ENCODE measurements at regions of chr11 and their contacts with region 1.

Region 1: GRCh38 chr11:447923-448731 is 2.0 kb upstream of the PTDSS2 start:
- DNase-seq: peak; percentile 81
- H3K4me3 ChIP-seq: peak overlapping the region; percentile 59 to 92 (median 91)
- H3K27ac ChIP-seq: peak overlapping the region; percentile 68
- H3K4me1 ChIP-seq: peaks cover 39% of the 10 kb centered on the region
- H3K27me3 ChIP-seq: no peaks in the 10 kb centered on the region
- CTCF ChIP-seq: peak; percentile 83 to 98

Region 2: GRCh38 chr11:250740-251299 is 197.3 kb before region 1 on chr11:
- CTCF ChIA-PET with region 1: interaction called, 3 read pairs
- dilution Hi-C with region 1: loop called (anchors 5 kb)
- in situ Hi-C with region 1: no loop called
- intact Hi-C with region 1: no loop called
- DNase-seq: peak; percentile 11
- H3K4me3 ChIP-seq: no peak overlapping the region
- H3K27ac ChIP-seq: no peak overlapping the region
- H3K4me1 ChIP-seq: no peaks in the 10 kb centered on the region
- H3K27me3 ChIP-seq: no peaks in the 10 kb centered on the region
- CTCF ChIP-seq: peak; percentile 56 to 62

Region 3: GRCh38 chr11:353179-353873 is 94.8 kb before region 1 on chr11:
- CTCF ChIA-PET with region 1: no interaction called
- dilution Hi-C with region 1: no loop called
- in situ Hi-C with region 1: no loop called
- intact Hi-C with region 1: no loop called
- DNase-seq: no peak
- H3K4me3 ChIP-seq: no peak overlapping the region
- H3K27ac ChIP-seq: no peak overlapping the region
- H3K4me1 ChIP-seq: peaks cover 22% of the 10 kb centered on the region
- H3K27me3 ChIP-seq: no peaks in the 10 kb centered on the region
- CTCF ChIP-seq: no peak

Region 4: GRCh38 chr11:363948-364761 is 84.0 kb before region 1 on chr11:
- CTCF ChIA-PET with region 1: no interaction called
- dilution Hi-C with region 1: no loop called
- in situ Hi-C with region 1: no loop called
- intact Hi-C with region 1: loop called (anchors 2 kb)
- DNase-seq: peak; percentile 83
- H3K4me3 ChIP-seq: no peak overlapping the region
- H3K27ac ChIP-seq: no peak overlapping the region
- H3K4me1 ChIP-seq: peaks cover 26% of the 10 kb centered on the region
- H3K27me3 ChIP-seq: peaks cover 5% of the 10 kb centered on the region
- CTCF ChIP-seq: peak; percentile 73 to 82

Region 5: DNA sequence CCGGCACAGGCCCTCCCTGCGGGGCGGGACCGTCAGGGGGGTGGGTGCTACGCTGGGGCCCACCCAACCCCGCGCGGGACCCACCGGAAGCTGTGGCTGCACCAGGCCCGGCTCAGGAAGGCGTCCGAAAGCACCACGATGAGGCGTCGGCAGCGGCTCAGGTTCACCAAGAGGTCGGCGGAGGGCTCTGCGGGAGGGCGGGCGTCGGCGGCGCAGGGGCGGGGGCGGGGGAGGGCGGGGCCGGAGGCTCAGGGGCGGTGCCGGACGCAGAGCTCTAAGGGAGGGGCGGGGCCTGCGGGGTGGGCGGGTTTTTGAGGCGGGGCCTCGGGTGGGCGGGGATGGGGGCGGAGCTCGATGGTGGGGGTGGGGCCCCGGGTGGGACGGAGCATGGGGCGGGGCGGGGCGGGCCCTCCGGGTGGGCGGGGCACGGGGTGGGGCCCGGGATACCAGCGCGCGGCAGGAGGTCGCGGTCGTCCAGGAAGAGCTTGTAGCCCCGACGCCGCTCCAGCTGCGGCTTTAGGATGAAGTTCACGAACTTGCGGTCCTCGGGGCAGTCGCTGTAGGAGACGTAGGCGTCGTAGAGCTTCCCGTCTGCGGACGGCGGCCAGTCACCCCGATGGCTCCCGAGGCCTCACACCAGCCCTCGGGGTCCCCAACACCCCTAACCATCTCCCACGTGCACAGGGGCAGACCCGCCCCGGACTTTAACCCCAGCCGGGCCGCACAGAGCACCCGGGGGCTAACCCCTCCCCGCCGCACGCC is 41.0 kb before region 1 on chr11:
- CTCF ChIA-PET with region 1: interaction called, 23 read pairs
- dilution Hi-C with region 1: no loop called
- in situ Hi-C with region 1: no loop called
- intact Hi-C with region 1: loop called (anchors 2 kb)
- DNase-seq: peak; percentile 81
- H3K4me3 ChIP-seq: no peak overlapping the region
- H3K27ac ChIP-seq: no peak overlapping the region
- H3K4me1 ChIP-seq: peaks cover 11% of the 10 kb centered on the region
- H3K27me3 ChIP-seq: no peaks in the 10 kb centered on the region
- CTCF ChIP-seq: no peak

Region 6: DNA sequence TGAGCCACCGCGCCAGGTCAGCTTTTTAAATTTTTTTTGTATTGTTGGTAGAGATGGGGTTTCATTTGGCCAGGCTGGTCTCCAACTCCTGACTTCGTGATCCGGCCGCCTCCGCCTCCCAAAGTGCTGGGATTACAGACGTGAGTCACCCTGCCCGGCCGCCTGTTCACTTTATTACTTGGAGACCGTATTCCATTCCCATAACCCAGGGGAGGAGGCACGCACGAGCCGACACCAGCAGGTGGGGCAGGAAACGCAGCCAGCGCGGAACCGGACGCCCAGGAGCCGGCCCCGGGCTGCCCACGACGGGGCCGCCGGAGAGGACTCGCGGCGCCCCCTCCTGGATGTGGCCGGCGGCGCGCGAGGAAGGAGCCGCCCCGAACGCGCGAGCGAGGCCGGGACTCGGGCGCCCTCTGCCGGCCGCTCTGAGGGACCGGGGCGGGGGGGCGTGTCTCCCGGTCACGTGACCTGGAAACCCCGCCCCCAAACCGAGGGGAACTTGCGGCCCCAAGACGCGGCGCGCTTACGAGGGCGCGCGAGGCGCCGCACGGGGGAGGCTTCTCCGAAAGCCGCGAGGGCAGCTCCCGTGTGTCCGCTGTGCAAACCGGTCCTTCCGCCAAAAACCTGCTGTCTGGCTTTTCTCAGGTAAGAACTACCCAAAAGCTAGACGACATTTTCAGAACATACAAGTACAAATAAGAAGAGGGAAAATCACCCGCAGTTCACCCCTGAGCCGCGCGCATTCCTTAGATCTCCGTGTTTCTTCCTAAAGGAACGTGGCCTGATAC is 70.5 kb after region 1 on chr11:
- CTCF ChIA-PET with region 1: interaction called, 4 read pairs
- dilution Hi-C with region 1: loop called (anchors 5 kb)
- in situ Hi-C with region 1: no loop called
- intact Hi-C with region 1: loop called (anchors 1 kb)
- DNase-seq: peak; percentile 97
- H3K4me3 ChIP-seq: peak overlapping the region in 1 of 3 experiments; percentile 13
- H3K27ac ChIP-seq: peak overlapping the region; percentile 48
- H3K4me1 ChIP-seq: peaks cover 21% of the 10 kb centered on the region
- H3K27me3 ChIP-seq: no peaks in the 10 kb centered on the region
- CTCF ChIP-seq: peak; percentile 72 to 85

Region 7: GRCh38 chr11:597166-597725 is 149.1 kb after region 1 on chr11:
- CTCF ChIA-PET with region 1: no interaction called
- dilution Hi-C with region 1: no loop called
- in situ Hi-C with region 1: no loop called
- intact Hi-C with region 1: no loop called
- DNase-seq: no peak
- H3K4me3 ChIP-seq: no peak overlapping the region
- H3K27ac ChIP-seq: no peak overlapping the region
- H3K4me1 ChIP-seq: no peaks in the 10 kb centered on the region
- H3K27me3 ChIP-seq: no peaks in the 10 kb centered on the region
- CTCF ChIP-seq: no peak

Measured in mammary epithelial cell (primary cell).